Heart left ventricle (tissue), 16 donors: ENCODE measurements at regions of chr12 and their contacts with region 1.

Region 1: GRCh38 chr12:95336390-95337067 is 118.9 kb downstream of the VEZT start:
- DNase-seq: peak; percentile 71 to 76 (median 73)
- ATAC-seq: peak; percentile 84 to 94 (median 90)
- H3K4me3 ChIP-seq: peak overlapping the region in 3 of 12 donors; percentile 10 to 23 (median 22)
- H3K27ac ChIP-seq: peak overlapping the region in 11 of 12 donors; percentile 12 to 79 (median 60)
- H3K4me1 ChIP-seq: peaks cover 0 to 18% (median 4%) of the 10 kb centered on the region in 12 donors
- H3K27me3 ChIP-seq: no peaks in the 10 kb centered on the region
- CTCF ChIP-seq: peak; percentile 61 to 96 (median 88)
- POLR2A ChIP-seq: no peak

Region 2: DNA sequence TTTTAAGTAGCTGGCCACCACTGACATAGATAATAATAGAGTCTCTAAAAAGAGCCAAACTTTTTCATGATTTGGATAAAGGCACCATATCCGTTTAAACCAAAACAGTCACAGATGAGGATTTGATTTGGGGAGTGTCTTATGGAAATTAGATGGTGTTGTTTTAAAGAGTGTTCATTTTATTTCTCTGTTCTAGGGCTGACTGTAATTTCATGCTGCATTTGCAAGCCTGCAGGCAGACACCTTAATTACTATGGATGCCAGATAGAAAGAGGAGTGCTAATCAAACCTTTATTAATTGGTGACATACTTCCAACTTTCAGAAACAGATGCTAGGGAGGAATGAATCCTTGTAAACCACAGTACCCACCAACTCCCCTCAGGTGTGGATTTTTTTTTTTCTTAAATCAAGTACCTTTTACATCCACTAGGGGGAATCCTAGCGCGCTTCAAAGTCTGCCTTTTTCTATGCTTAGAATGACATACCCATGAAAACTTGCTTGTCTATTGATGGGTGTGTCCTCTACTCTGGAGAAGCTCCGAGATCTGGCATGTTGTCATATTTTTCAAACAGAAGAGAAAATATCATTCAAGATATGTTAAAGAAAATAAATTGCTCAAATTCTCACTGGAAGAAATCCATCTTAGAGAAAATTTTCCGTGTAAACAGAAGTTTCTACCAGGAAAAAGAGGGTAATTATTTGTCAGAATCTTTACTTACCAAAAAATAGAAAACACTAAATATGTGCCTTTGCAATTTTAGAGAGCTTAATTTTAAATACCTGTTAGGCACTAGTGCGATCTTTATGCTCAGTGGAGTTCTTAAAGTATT is 1202.3 kb before region 1 on chr12:
- intact Hi-C with region 1: loop called in 1 of 10 experiments (anchors 10 kb)
- DNase-seq: no peak
- ATAC-seq: peak; percentile 32 to 81 (median 74)
- H3K4me3 ChIP-seq: no peak overlapping the region
- H3K27ac ChIP-seq: no peak overlapping the region
- H3K4me1 ChIP-seq: peaks cover 0 to 2% (median 0%) of the 10 kb centered on the region in 12 donors
- H3K27me3 ChIP-seq: peaks cover 0 to 4% (median 0%) of the 10 kb centered on the region in 9 donors
- CTCF ChIP-seq: peak; percentile 70 to 90 (median 82)
- POLR2A ChIP-seq: no peak

Region 3: GRCh38 chr12:94532490-94533422 is 803.8 kb before region 1 on chr12:
- intact Hi-C with region 1: loop called in 1 of 10 experiments (anchors 10 kb)
- DNase-seq: peak; percentile 57 to 81 (median 62)
- ATAC-seq: peak; percentile 74 to 92 (median 86)
- H3K4me3 ChIP-seq: no peak overlapping the region
- H3K27ac ChIP-seq: no peak overlapping the region
- H3K4me1 ChIP-seq: no peaks in the 10 kb centered on the region
- H3K27me3 ChIP-seq: no peaks in the 10 kb centered on the region
- CTCF ChIP-seq: peak; percentile 61 to 85 (median 78)
- POLR2A ChIP-seq: no peak

Region 4: DNA sequence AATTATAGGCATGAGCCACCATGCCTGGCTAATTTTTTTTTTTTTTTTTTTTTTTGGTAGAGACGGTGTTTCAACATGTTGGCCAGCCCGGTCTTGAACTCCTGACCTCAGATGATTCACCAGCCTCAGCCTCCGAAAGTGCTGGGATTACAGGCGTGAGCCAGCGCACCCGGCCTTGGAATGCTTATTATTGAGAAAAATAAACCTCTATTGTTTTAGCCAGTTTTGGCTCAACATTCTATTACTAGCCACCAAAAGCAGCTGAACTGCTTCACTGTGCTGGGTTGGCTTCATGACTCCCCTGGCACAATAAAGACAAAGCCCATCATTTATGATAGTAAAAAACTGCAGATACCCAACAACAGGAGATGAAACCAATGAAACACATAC is 783.4 kb before region 1 on chr12:
- intact Hi-C with region 1: loop called in 3 of 10 experiments (anchors 5 to 10 kb)
- DNase-seq: no peak
- ATAC-seq: no peak
- H3K4me3 ChIP-seq: no peak overlapping the region
- H3K27ac ChIP-seq: no peak overlapping the region
- H3K4me1 ChIP-seq: no peaks in the 10 kb centered on the region
- H3K27me3 ChIP-seq: no peaks in the 10 kb centered on the region
- CTCF ChIP-seq: no peak
- POLR2A ChIP-seq: no peak

Region 5: DNA sequence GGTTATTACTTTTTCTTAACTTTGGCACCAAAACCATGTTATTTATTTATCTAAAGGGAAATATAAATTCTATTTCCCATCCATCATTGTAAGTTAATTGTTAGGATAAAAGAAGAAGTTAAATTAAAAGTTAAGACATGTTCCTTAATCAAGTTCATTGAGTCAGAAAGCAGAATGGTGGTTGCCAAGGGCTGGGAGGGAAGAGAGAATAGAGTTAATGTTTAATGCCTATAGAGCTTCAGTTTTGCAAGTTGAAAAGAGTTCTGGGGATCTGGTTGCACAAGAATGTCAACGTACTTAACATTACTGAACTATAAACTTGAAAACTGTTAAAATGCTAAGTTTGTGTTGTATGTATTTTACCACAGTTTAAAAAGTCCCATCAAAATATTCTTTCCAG is 199.9 kb before region 1 on chr12:
- intact Hi-C with region 1: no loop called
- DNase-seq: no peak
- ATAC-seq: no peak
- H3K4me3 ChIP-seq: no peak overlapping the region
- H3K27ac ChIP-seq: no peak overlapping the region
- H3K4me1 ChIP-seq: peaks cover 0 to 19% (median 0%) of the 10 kb centered on the region in 12 donors
- H3K27me3 ChIP-seq: no peaks in the 10 kb centered on the region
- CTCF ChIP-seq: no peak
- POLR2A ChIP-seq: no peak

Region 6: GRCh38 chr12:95217377-95218149 is 119.0 kb before region 1 on chr12 and contains the starts of genes FGD6 and VEZT:
- intact Hi-C with region 1: loop called in 1 of 10 experiments (anchors 5 kb)
- DNase-seq: peak; percentile 98 to 99 (median 99)
- ATAC-seq: peak; percentile 95 to 97 (median 96)
- H3K4me3 ChIP-seq: peak within 1 kb of the TSS; percentile 71 to 94 (median 82)
- H3K27ac ChIP-seq: peak within 1 kb of the TSS; percentile 92 to 99 (median 96)
- H3K4me1 ChIP-seq: peaks cover 0 to 60% (median 30%) of the 10 kb centered on the region in 12 donors
- H3K27me3 ChIP-seq: no peaks in the 10 kb centered on the region
- CTCF ChIP-seq: peak; percentile 35 to 89 (median 62)
- POLR2A ChIP-seq: peak; percentile 15 to 85
- total RNA-seq, gene FGD6: 11.9 to 29.1 (median 19.5) TPM
- total RNA-seq, gene VEZT: 53.6 to 89.9 (median 66.2) TPM

Region 7: DNA sequence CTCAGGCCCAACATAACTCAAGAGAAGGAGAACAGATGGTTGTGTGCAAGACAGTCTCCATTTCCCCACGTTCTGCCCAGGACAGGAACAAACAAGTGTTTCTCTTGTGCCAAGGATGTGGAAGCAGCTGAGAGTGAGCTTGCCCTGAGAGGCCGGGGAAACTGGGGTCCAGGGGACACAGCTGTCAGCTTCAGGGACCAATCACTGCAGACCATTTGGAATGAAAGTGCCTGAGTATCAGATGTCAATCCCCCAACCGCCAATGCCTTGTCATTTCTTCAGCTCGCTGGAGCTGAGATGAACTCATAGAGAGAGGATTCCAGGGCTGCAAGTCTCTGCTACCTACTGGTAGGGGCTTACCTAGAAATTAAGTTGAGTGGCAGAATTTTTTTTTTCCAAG is 65.6 kb after region 1 on chr12:
- intact Hi-C with region 1: no loop called
- DNase-seq: no peak
- ATAC-seq: no peak
- H3K4me3 ChIP-seq: no peak overlapping the region
- H3K27ac ChIP-seq: no peak overlapping the region
- H3K4me1 ChIP-seq: no peaks in the 10 kb centered on the region
- H3K27me3 ChIP-seq: peaks cover 0 to 4% (median 0%) of the 10 kb centered on the region in 9 donors
- CTCF ChIP-seq: no peak
- POLR2A ChIP-seq: no peak

Region 8: DNA sequence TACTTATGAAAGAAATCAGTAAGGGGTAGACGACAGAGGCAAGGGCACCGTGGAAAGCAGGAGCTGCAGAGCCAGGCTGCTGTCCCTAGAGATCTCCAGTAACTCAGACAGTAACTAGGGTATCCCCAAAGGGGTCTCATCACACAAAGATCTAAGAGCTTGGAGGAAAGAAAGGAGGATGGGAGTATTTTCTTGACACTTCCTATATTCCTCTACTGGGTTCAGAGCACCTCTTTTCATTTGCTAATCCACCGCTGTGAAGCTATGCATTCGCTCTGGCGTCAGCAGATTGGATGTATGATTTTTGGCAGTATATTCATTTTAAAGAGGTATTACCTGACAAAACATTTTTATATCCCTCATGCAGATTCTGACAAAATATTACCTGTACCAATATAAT is 202.1 kb after region 1 on chr12:
- intact Hi-C with region 1: loop called in 3 of 10 experiments (anchors 5 to 10 kb)
- DNase-seq: no peak
- ATAC-seq: no peak
- H3K4me3 ChIP-seq: no peak overlapping the region
- H3K27ac ChIP-seq: no peak overlapping the region
- H3K4me1 ChIP-seq: peaks cover 0 to 2% (median 0%) of the 10 kb centered on the region in 12 donors
- H3K27me3 ChIP-seq: no peaks in the 10 kb centered on the region
- CTCF ChIP-seq: no peak
- POLR2A ChIP-seq: no peak